Activated B cell treated with CpG ODN at 0.5 μM for 24 hours (primary cell): ENCODE measurements at regions of chr6 and their contacts with region 1.

Region 1: GRCh38 chr6:5302995-5303622 is 41.8 kb downstream of the FARS2 start:
- DNase-seq: peak; percentile 40
- ATAC-seq: peak; percentile 70
- H3K4me3 Mint-ChIP-seq: peak overlapping the region; percentile 77
- H3K27ac Mint-ChIP-seq: peak overlapping the region; percentile 84
- H3K4me1 Mint-ChIP-seq: peaks cover 40% of the 10 kb centered on the region
- H3K27me3 Mint-ChIP-seq: no peaks in the 10 kb centered on the region
- CTCF ChIP-seq: no peak

Region 2: DNA sequence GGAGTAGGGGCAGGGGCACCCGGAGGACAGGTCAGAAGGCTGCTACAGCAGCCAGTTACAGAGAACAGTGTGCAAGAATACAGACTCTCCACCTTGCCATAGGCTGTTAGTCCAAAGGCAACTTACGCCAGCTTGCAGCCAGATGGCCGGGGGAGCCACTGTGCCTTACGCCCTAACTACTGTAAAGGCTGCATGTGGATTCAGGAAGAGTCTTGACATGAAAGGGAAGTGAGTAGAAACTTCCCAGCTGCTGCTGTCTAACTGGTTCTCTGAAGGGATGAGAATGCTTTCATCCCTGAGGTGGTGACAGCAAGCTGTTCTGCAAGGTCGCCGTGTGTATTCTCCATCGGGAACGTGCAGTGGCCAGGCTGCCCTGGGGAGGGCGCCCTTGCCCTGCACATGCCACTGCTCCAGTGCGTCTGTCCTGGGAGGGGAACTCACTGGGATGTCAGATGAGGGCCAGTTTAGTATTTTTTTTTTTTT is 88.5 kb before region 1 on chr6:
- CTCF ChIA-PET with region 1: interaction called, 5 read pairs
- POLR2A ChIA-PET with region 1: no interaction called
- intact Hi-C with region 1: loop called (anchors 1 kb)
- DNase-seq: peak; percentile 20
- ATAC-seq: no peak
- H3K4me3 Mint-ChIP-seq: no peak overlapping the region
- H3K27ac Mint-ChIP-seq: no peak overlapping the region
- H3K4me1 Mint-ChIP-seq: peaks cover 11% of the 10 kb centered on the region
- H3K27me3 Mint-ChIP-seq: no peaks in the 10 kb centered on the region
- CTCF ChIP-seq: no peak

Region 3: DNA sequence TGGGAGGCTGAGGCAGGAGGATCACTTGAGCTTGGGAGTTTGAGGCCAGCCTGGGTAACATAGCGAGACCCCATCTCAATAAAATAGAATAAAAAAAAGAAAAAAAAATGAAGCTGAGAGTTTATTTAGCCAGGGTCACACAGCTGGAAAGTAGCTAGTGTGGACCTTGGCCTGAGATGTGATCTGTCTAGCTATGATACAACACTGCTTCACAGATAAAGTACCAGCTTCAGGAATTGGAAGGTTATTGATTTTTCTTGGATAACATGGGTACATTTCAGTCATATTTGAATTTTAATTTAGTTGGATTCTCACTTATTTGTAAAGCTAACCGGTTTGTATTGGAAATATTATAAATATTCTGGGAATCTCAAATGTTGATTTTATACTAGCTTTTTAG is 36.7 kb before region 1 on chr6:
- CTCF ChIA-PET with region 1: interaction called, 13 read pairs
- POLR2A ChIA-PET with region 1: interaction called, 37 read pairs
- intact Hi-C with region 1: no loop called
- DNase-seq: no peak
- ATAC-seq: no peak
- H3K4me3 Mint-ChIP-seq: no peak overlapping the region
- H3K27ac Mint-ChIP-seq: no peak overlapping the region
- H3K4me1 Mint-ChIP-seq: peaks cover 15% of the 10 kb centered on the region
- H3K27me3 Mint-ChIP-seq: no peaks in the 10 kb centered on the region
- CTCF ChIP-seq: no peak

Region 4: GRCh38 chr6:5292154-5292553 is 11.0 kb before region 1 on chr6:
- CTCF ChIA-PET with region 1: interaction called, 14 read pairs
- POLR2A ChIA-PET with region 1: interaction called, 15 read pairs
- intact Hi-C with region 1: no loop called
- DNase-seq: no peak
- ATAC-seq: no peak
- H3K4me3 Mint-ChIP-seq: no peak overlapping the region
- H3K27ac Mint-ChIP-seq: peak overlapping the region; percentile 46
- H3K4me1 Mint-ChIP-seq: peaks cover 61% of the 10 kb centered on the region
- H3K27me3 Mint-ChIP-seq: no peaks in the 10 kb centered on the region
- CTCF ChIP-seq: no peak

Region 5: GRCh38 chr6:5379647-5380242 is 76.6 kb after region 1 on chr6:
- CTCF ChIA-PET with region 1: interaction called, 7 read pairs
- POLR2A ChIA-PET with region 1: interaction called, 3 read pairs
- intact Hi-C with region 1: loop called (anchors 1 kb)
- DNase-seq: no peak
- ATAC-seq: peak; percentile 34
- H3K4me3 Mint-ChIP-seq: no peak overlapping the region
- H3K27ac Mint-ChIP-seq: no peak overlapping the region
- H3K4me1 Mint-ChIP-seq: peaks cover 3% of the 10 kb centered on the region
- H3K27me3 Mint-ChIP-seq: no peaks in the 10 kb centered on the region
- CTCF ChIP-seq: no peak

Region 6: GRCh38 chr6:5422321-5422915 is 119.3 kb after region 1 on chr6:
- CTCF ChIA-PET with region 1: no interaction called
- POLR2A ChIA-PET with region 1: no interaction called
- intact Hi-C with region 1: no loop called
- DNase-seq: no peak
- ATAC-seq: no peak
- H3K4me3 Mint-ChIP-seq: no peak overlapping the region
- H3K27ac Mint-ChIP-seq: no peak overlapping the region
- H3K4me1 Mint-ChIP-seq: peaks cover 11% of the 10 kb centered on the region
- H3K27me3 Mint-ChIP-seq: no peaks in the 10 kb centered on the region
- CTCF ChIP-seq: no peak

Region 7: GRCh38 chr6:5566718-5567117 is 263.6 kb after region 1 on chr6:
- CTCF ChIA-PET with region 1: no interaction called
- POLR2A ChIA-PET with region 1: no interaction called
- intact Hi-C with region 1: no loop called
- DNase-seq: no peak
- ATAC-seq: no peak
- H3K4me3 Mint-ChIP-seq: no peak overlapping the region
- H3K27ac Mint-ChIP-seq: peak overlapping the region; percentile 35
- H3K4me1 Mint-ChIP-seq: peaks cover 21% of the 10 kb centered on the region
- H3K27me3 Mint-ChIP-seq: no peaks in the 10 kb centered on the region
- CTCF ChIP-seq: no peak